RWPE1 (cell line): ENCODE measurements at regions of chr19 and their contacts with region 1.

Region 1: DNA sequence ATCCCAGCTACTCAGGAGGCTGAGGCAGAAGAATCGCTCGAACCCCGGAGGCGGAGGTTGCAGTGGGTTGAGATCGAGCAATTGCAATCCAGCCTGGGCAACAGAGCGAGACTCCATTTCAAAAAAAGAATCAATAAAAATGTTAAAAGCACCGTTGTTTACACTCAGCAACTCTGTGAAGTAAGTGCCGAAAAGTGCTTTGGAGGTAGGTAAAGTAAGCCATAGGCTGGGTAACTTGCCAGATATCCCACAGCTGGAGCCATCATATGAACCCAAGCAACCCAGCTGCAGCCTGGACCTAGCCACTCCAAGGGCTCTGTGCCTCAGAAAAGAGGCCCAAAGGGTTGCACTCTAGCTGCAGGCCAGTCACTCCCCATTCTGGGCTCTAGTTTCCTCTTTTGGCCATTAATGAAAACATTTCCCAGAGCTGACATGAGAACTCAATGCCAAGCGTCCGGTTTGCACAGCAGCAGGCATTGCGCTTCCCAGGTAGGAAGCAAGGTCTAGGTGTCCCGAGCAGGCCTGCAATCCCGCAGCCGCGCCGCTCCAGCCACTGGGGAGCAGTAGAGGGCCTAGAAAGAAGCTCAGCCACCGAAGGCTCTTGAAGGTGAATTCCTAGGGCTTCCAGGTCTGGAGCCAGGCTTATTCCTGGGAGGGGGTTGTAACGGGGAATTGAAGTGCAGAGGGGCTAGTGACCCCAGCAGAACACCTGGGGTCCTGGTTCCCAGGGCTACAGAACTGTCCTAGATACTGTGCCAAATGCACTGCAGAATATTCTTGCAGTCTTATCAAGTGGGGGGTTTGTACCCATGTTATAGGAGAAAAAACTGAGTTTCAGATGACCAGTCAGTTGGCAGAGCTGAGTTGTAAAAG is 4.1 kb upstream of the CD79A start:
- DNase-seq: peak; percentile 66
- H3K27ac ChIP-seq: peak overlapping the region; percentile 64
- CTCF ChIP-seq: peak; percentile 82

Region 2: GRCh38 chr19:41641879-41642485 is 231.0 kb before region 1 on chr19:
- CTCF ChIA-PET with region 1: no interaction called
- POLR2A ChIA-PET with region 1: no interaction called
- DNase-seq: peak; percentile 79
- H3K27ac ChIP-seq: no peak overlapping the region
- CTCF ChIP-seq: peak; percentile 92

Region 3: GRCh38 chr19:41945135-41945766 is 72.2 kb after region 1 on chr19:
- CTCF ChIA-PET with region 1: interaction called, 15 read pairs
- POLR2A ChIA-PET with region 1: no interaction called
- DNase-seq: no peak
- H3K27ac ChIP-seq: no peak overlapping the region
- CTCF ChIP-seq: no peak

Region 4: DNA sequence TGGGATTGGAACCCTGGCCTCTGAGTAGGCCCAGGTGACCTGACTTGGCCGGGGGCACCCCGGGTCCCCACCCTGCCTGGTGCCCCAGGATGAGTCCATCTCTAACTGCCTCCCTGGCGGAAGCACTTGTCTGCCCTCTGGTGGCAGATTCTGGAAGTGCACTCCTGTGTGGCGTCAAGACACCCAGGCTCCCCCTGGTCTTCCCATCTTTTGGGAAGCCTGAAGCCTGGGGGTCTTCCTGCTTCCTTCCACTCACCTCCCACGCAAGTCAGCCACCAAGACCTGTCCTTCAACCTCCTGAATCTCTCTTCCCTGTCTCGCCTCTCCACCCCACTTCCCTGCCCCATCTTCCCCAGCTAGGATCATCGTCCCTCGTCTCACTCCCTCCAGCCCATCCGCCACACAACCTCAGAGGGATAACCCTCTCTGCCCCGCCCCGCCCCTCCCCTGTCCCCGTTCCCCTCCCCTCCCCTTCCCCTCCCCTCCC is 78.7 kb after region 1 on chr19:
- CTCF ChIA-PET with region 1: interaction called, 21 read pairs
- POLR2A ChIA-PET with region 1: no interaction called
- DNase-seq: peak; percentile 80
- H3K27ac ChIP-seq: no peak overlapping the region
- CTCF ChIP-seq: peak; percentile 95

Region 5: GRCh38 chr19:41959056-41960053 is 86.3 kb after region 1 on chr19 and contains the start of gene RABAC1:
- CTCF ChIA-PET with region 1: interaction called, 21 read pairs
- POLR2A ChIA-PET with region 1: no interaction called
- DNase-seq: peak; percentile 82
- H3K27ac ChIP-seq: peak within 1 kb of the TSS; percentile 83
- CTCF ChIP-seq: no peak